Activated CD4-positive, alpha-beta memory T cell treated with anti-CD3 and anti-CD28 coated beads for 36 hours (primary cell): ENCODE measurements at regions of chr15 and their contacts with region 1.

Region 1: GRCh38 chr15:52730173-52730572 is 51.0 kb upstream of the ATOSA start:
- DNase-seq: peak; percentile 53
- H3K4me3 Mint-ChIP-seq: no peak overlapping the region
- H3K27ac Mint-ChIP-seq: peak overlapping the region; percentile 43
- H3K4me1 Mint-ChIP-seq: peaks cover 36% of the 10 kb centered on the region
- H3K27me3 Mint-ChIP-seq: no peaks in the 10 kb centered on the region

Region 2: DNA sequence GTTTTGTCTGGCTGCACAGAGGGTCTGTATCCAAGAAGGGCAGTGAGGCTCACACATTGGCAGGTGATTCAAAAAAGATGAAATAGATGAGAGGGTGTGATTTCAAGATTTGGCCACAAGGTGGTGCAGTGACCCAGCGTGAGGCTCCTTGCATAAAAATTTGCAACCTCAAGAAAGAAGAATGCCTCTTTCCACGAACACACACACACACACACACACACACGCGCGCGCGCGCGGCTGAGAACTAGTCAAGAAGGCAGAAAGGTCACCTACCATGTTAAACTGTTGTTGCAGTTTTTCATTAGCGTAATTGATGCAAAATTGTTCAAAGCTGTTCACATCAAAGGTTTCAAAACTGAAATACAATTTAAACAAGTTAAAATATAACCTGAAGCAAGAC is 473.8 kb before region 1 on chr15:
- CTCF ChIA-PET with region 1: interaction called, 94 read pairs
- POLR2A ChIA-PET with region 1: no interaction called
- intact Hi-C with region 1: loop called (anchors 1 kb)
- DNase-seq: peak; percentile 84
- H3K4me3 Mint-ChIP-seq: peak overlapping the region; percentile 37
- H3K27ac Mint-ChIP-seq: peak overlapping the region; percentile 56
- H3K4me1 Mint-ChIP-seq: peaks cover 23% of the 10 kb centered on the region
- H3K27me3 Mint-ChIP-seq: no peaks in the 10 kb centered on the region